Activated T-helper 2 cell treated with anti-CD3 and anti-CD28 coated beads, Interferon-gamma antibody, Interleukin-2, Interleukin-4, amounts not matched to agents 10 μg/mL and 5 μg/mL and 100 μg/mL, durations not matched to agents 14 hours and 24 hours and 36 hours (primary cell): ENCODE measurements at regions of chr2 and their contacts with region 1.

Region 1: DNA sequence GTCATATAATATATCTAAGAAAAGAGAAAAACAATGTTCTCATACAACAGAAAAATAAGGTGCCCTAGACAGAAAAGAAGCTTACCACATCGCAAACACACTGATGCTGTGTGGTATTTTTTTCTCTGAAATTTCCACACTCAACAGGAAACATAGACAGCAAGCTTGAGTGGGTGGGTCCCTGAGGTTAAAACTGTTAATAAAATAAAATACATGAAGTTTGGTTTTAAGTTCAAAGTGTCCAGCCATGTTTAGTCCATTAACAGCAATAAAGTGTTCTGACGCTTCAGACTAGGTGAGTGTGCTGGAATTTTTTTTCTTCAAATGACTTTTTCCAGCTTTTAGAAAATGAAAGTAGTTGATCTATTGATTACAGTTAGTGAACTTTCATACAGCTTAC is 83.3 kb upstream of the EPB41L5 start:
- DNase-seq: peak; percentile 18
- H3K4me3 Mint-ChIP-seq: peak overlapping the region; percentile 72
- H3K27ac Mint-ChIP-seq: peak overlapping the region; percentile 73
- H3K4me1 Mint-ChIP-seq: peaks cover 59% of the 10 kb centered on the region
- H3K27me3 Mint-ChIP-seq: no peaks in the 10 kb centered on the region

Region 2: GRCh38 chr2:119795309-119796303 is 133.9 kb before region 1 on chr2:
- intact Hi-C with region 1: no loop called
- DNase-seq: no peak
- H3K4me3 Mint-ChIP-seq: no peak overlapping the region
- H3K27ac Mint-ChIP-seq: no peak overlapping the region
- H3K4me1 Mint-ChIP-seq: peaks cover 2% of the 10 kb centered on the region
- H3K27me3 Mint-ChIP-seq: no peaks in the 10 kb centered on the region

Region 3: DNA sequence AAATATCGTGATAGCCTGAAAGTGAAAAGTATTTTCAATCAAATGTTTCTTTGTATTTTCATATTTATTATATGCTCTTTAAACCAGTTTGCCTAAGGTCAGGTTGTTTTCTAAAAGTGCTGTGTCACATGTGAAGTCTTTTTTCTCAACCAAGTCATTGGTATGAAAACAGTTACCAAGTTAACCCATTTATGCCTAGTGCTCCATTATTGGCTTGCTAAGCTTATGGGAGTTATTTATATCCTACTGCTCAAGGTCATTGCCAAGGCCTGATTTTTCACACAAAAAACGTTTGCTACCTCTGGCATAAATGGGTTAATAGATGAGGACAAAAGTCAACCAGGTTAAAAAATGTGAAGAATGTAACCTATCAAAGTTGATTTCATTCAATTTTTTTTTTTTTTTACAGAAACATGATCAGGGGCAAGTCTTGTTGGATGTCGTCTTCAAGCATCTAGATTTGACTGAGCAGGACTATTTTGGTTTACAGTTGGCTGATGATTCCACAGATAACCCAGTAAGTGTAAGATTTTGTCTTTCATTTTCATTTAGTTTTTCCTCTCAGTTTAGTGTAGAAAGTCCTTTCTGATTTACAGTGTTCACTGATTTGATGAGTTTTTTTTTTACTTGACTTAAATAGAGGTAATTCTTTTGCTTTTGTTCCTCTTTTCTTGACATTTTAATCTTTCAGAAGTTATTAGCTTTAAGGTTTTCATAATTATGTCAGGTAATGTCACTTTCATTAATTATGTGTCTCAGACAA is 67.2 kb before region 1 on chr2:
- intact Hi-C with region 1: loop called (anchors 2 kb)
- DNase-seq: no peak
- H3K4me3 Mint-ChIP-seq: peak overlapping the region; percentile 37
- H3K27ac Mint-ChIP-seq: peak overlapping the region; percentile 63
- H3K4me1 Mint-ChIP-seq: peaks cover 60% of the 10 kb centered on the region
- H3K27me3 Mint-ChIP-seq: no peaks in the 10 kb centered on the region

Region 4: DNA sequence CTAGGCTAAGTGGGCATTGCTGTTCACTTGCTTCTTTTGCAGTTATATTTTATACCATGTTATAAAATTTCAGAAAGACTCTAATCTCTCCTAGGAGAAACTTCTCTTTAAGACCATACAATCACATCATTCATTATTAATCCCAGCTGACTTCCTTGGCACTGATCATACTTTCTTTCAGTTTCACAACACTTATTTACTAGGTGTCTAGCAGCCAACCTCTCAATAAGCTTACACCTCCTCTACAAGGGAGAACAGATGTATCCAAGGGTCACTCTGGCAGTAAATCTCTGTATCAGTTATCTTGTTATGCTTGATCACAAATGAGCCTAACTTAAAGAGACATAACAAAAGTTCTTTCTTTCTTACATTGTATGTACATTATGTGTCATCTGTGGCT is 13.5 kb after region 1 on chr2:
- intact Hi-C with region 1: loop called (anchors 2 kb)
- DNase-seq: no peak
- H3K4me3 Mint-ChIP-seq: no peak overlapping the region
- H3K27ac Mint-ChIP-seq: no peak overlapping the region
- H3K4me1 Mint-ChIP-seq: peaks cover 14% of the 10 kb centered on the region
- H3K27me3 Mint-ChIP-seq: no peaks in the 10 kb centered on the region

Region 5: DNA sequence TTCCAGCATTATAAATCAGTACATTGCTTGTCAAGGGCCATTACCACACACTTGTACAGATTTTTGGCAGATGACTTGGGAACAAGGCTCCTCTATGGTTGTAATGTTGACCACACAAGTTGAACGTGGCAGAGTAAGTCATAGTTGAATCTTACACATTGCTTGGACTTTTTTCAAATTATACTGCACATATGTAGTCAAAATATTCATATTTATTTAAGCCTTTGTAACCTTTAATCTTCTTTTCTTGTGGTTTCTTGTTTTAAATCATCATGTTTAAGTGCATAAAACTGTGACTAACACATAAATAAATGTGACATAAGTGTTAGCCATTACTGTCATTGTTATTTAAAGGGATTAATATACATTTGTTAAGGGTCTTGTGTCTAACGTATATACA is 31.3 kb after region 1 on chr2:
- intact Hi-C with region 1: no loop called
- DNase-seq: no peak
- H3K4me3 Mint-ChIP-seq: no peak overlapping the region
- H3K27ac Mint-ChIP-seq: no peak overlapping the region
- H3K4me1 Mint-ChIP-seq: peaks cover 6% of the 10 kb centered on the region
- H3K27me3 Mint-ChIP-seq: no peaks in the 10 kb centered on the region